ENCODE measurements at regions of chr7 and their contacts with region 1.

Region 1: GRCh38 chr7:95690367-95690947 is 81.9 kb upstream of the DYNC1I1 start:
- DNase-seq: peak; percentile 43
- H3K4me3 ChIP-seq: no peak overlapping the region
- H3K27ac ChIP-seq: no peak overlapping the region
- H3K4me1 ChIP-seq: no peaks in the 10 kb centered on the region
- CTCF ChIP-seq: peak; percentile 87

Region 2: GRCh38 chr7:95511716-95512260 is 178.7 kb before region 1 on chr7:
- CTCF ChIA-PET with region 1: interaction called, 11 read pairs
- POLR2A ChIA-PET with region 1: no interaction called
- intact Hi-C with region 1: loop called (anchors 2 kb)
- DNase-seq: peak; percentile 63
- H3K4me3 ChIP-seq: no peak overlapping the region
- H3K27ac ChIP-seq: no peak overlapping the region
- H3K4me1 ChIP-seq: no peaks in the 10 kb centered on the region
- CTCF ChIP-seq: peak; percentile 89

Region 3: DNA sequence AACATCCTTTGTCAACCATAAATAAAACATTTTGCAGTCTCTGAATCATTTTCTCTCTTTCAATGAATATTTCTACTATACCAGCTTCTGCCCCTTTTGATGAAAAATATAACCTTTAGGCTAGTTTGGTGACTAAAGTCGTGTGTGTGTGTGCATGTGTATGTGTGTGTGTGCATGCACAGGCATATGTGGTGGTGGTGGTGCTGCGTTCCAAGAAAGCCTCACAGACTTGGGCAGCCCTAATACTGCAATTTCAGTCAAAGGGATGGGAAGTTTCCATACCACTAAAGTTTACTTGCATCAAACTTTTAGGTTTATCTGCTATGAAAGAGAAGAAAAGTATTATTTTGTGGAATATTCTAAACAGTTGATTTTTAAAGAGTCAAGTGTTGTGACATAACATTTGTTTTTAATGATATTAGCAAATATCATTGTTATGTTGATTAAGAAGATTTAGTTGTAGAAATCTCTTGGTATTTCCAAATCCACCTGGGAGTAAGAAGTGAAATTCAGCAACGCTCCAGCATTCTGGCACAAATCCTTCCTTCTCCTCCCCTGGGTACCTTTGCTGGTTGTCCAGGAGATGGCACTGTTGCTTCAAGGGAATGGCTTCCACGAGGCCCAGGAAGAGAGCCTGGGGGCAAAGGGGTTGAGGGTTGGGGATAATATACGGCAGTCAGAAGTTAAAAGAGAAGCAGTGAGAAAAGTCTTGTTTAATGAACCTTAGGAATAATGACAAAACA is 163.3 kb before region 1 on chr7:
- CTCF ChIA-PET with region 1: no interaction called
- POLR2A ChIA-PET with region 1: interaction called, 4 read pairs
- intact Hi-C with region 1: loop called (anchors 1 kb)
- DNase-seq: peak; percentile 49
- H3K4me3 ChIP-seq: no peak overlapping the region
- H3K27ac ChIP-seq: no peak overlapping the region
- H3K4me1 ChIP-seq: no peaks in the 10 kb centered on the region
- CTCF ChIP-seq: peak; percentile 90

Region 4: DNA sequence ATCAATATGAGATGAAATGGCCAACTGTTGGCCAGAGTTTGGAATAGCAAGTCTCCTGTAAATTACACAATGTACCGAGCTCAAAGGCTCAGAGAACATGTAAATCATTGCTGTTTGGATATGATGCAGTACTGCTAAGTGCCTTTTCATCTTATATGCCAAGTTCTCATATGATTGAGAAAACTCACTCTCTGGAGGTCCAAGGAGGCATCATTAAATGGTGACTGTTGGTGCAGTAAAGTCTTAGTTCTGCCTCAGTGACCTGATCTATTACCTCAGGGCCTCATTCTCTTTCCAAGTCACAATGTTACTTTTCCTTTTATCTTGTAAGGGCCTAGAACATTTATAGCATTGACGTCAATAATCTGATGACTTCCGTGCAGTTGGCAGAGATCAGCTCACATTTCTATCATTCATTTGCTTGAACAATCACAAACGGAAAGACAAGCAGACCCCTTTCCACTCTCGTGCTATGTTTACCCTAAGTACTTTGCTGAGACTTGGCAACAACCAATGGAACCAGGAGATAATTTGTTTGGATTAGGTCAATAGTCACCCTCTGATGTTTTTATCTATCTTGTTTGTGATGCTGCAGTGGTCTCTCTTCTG is 61.5 kb before region 1 on chr7:
- CTCF ChIA-PET with region 1: no interaction called
- POLR2A ChIA-PET with region 1: no interaction called
- intact Hi-C with region 1: no loop called
- DNase-seq: no peak
- H3K4me3 ChIP-seq: no peak overlapping the region
- H3K27ac ChIP-seq: no peak overlapping the region
- H3K4me1 ChIP-seq: no peaks in the 10 kb centered on the region
- CTCF ChIP-seq: no peak

Region 5: GRCh38 chr7:95772298-95772770 is 81.9 kb after region 1 on chr7 and contains the start of gene DYNC1I1:
- CTCF ChIA-PET with region 1: no interaction called
- POLR2A ChIA-PET with region 1: no interaction called
- intact Hi-C with region 1: no loop called
- DNase-seq: no peak
- H3K4me3 ChIP-seq: no peak within 1 kb of the TSS
- H3K27ac ChIP-seq: no peak within 1 kb of the TSS
- H3K4me1 ChIP-seq: no peaks in the 10 kb centered on the region
- CTCF ChIP-seq: no peak
- total RNA-seq, gene DYNC1I1: not detected in 2 replicates

Region 6: DNA sequence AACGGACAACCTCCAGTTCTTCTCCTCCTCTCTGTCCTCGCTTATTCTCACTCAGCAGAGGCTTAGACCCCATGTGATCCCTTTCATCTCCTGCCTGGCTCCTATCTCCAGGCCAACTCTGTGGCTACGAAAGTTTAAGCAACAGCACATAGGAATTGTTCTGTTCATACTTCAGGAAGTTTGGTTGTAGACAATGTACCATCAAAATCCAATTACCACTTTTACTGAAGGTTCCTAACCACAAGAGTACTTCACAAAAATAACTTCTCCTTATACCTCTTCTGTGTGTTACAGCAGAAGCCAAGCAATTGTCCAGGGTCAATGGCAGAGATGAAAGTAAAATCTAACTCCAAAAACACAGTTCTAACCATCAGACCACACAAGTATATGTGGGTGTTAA is 551.4 kb after region 1 on chr7:
- CTCF ChIA-PET with region 1: no interaction called
- POLR2A ChIA-PET with region 1: no interaction called
- intact Hi-C with region 1: no loop called
- DNase-seq: no peak
- H3K4me3 ChIP-seq: no peak overlapping the region
- H3K27ac ChIP-seq: no peak overlapping the region
- H3K4me1 ChIP-seq: no peaks in the 10 kb centered on the region
- CTCF ChIP-seq: no peak